Activated CD4-positive, alpha-beta T cell treated with anti-CD3 and anti-CD28 coated beads, Interleukin-2, amount 10 ng/mL, durations not matched to agents 24 days and 14 days (primary cell): ENCODE measurements at regions of chr7 and their contacts with region 1.

Region 1: DNA sequence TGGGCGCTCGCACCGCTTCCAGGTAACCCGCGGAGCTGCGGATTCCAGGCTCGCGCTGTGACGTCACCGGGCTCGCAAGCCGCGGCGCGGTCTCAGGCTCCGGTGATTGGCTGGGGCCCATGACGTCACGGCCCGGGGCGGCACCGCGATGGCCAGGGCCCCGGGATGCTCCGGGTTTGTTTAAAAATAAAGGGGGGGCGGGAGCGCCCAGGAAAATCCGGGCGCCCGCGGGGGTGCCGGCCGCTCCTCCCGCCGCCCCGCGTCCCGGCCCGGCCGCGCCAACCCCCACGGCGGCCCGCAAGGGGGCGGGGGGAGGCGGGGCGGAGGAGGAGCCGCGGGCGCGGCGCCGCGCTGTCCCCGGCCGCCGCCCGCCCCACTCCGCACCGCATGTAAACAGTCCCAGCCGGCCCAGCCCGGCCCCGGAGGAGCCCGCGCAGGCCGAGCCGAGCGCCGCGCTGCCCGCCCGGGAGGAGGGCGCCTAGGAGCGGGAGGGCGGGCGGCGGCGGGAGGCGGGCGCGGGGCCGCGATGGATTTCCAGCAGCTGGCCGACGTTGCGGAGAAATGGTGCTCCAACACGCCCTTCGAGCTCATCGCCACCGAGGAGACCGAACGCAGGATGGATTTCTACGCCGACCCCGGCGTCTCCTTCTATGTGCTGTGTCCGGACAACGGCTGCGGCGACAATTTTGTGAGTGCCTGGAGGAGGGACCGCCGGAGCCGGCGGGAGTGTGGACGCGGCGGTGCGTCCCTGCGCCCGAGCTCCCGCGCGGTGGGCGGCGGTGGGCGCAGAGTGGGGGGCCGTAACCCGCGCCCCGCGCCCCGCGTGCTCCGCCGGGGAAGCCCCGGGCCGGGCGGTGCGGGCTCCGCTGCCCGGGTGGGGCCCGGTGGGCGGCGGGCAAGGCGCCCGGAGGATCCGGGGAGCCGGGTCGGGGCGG is at the start of gene MTURN:
- DNase-seq: peak; percentile 96
- H3K4me3 Mint-ChIP-seq: peak within 1 kb of the TSS; percentile 92
- H3K27ac Mint-ChIP-seq: peak within 1 kb of the TSS; percentile 81
- H3K4me1 Mint-ChIP-seq: peaks cover 10% of the 10 kb centered on the region
- H3K27me3 Mint-ChIP-seq: peaks cover 35% of the 10 kb centered on the region
- total RNA-seq, gene MTURN: 3.8 and 4.2 TPM in 2 replicates

Region 2: DNA sequence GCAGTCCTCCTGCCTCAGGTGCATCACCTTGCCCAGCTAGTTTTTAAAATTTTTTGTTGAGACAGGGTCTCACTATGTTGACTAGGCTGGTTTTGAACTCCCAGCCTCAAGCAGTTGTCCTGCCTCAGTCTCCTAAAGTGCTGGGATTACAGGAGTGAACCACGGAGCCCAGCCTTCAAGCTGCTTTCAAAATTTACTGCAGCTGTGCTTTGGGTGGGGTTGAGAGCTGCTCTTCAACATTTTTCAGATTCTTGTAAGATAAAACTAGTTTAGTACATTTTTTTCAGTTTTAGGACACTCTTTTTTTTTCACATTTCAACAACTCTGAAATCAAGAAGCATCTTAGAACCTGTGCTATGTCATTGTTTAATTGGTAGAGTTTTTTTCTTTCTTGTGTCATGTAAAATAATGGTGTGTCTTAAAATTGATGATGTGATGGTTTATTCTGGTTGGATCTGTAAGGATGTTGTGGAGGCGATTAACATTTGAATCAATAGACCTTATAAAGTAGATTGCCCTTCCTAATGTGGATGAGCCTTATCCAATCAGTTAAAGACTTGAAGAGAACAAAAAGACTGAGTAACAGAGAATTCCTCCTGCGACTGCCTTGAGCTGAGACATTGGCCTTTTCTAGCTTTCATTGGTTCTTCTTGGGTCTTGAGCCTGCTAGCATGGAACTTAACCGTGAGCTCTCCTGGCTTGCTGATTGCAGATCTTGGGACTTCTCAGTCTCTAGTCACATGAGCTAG is 93.2 kb before region 1 on chr7:
- intact Hi-C with region 1: no loop called
- DNase-seq: no peak
- H3K4me3 Mint-ChIP-seq: no peak overlapping the region
- H3K27ac Mint-ChIP-seq: no peak overlapping the region
- H3K4me1 Mint-ChIP-seq: peaks cover 7% of the 10 kb centered on the region
- H3K27me3 Mint-ChIP-seq: no peaks in the 10 kb centered on the region

Region 3: DNA sequence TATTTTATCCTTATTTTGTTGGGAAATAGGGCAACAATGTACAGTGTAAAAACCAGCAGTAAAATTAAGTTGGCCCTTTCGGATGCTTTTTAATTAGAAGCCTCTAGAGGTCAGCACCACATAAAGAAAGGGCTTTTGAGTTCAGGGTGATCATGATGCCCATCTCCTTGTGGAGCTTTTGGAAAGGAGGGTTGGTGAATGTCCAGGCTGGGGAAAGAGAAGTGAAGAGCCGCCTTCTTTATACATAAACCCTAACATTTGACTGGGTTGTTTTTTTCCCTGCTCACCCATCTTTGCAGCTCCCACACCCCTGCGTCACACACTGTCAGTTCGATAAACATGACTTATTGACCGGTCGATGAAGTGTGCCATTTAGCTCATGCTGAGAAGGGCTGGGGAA is 29.7 kb after region 1 on chr7:
- intact Hi-C with region 1: loop called (anchors 2 kb)
- DNase-seq: no peak
- H3K4me3 Mint-ChIP-seq: no peak overlapping the region
- H3K27ac Mint-ChIP-seq: no peak overlapping the region
- H3K4me1 Mint-ChIP-seq: peaks cover 35% of the 10 kb centered on the region
- H3K27me3 Mint-ChIP-seq: no peaks in the 10 kb centered on the region

Region 4: GRCh38 chr7:30176463-30177109 is 41.7 kb after region 1 on chr7:
- intact Hi-C with region 1: no loop called
- DNase-seq: no peak
- H3K4me3 Mint-ChIP-seq: no peak overlapping the region
- H3K27ac Mint-ChIP-seq: no peak overlapping the region
- H3K4me1 Mint-ChIP-seq: peaks cover 7% of the 10 kb centered on the region
- H3K27me3 Mint-ChIP-seq: no peaks in the 10 kb centered on the region

Region 5: DNA sequence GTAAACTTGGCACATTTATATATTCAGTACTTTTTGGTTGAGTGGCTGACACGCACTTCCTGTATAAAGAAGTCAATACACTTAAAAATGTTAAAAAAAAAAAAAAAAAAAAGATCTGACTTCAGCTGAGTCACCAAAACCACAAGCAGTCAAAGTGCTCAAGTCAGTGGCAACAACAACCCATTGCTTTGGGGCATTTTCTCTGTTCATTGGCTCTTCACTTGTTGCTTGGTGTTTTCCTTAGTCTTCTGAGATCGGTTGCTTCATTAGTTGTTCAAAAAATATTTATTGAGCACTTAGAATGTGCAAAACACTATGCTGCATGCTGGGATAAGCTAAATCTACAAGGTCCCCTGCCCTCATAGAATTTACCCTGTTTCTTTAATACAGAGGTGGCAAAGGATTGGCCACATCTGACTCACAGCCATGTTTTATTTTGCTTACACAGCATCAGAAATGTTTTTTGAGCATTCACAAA is 213.2 kb after region 1 on chr7:
- intact Hi-C with region 1: no loop called
- DNase-seq: peak; percentile 87
- H3K4me3 Mint-ChIP-seq: peak overlapping the region; percentile 67
- H3K27ac Mint-ChIP-seq: peak overlapping the region; percentile 89
- H3K4me1 Mint-ChIP-seq: peaks cover 54% of the 10 kb centered on the region
- H3K27me3 Mint-ChIP-seq: no peaks in the 10 kb centered on the region

Region 6: DNA sequence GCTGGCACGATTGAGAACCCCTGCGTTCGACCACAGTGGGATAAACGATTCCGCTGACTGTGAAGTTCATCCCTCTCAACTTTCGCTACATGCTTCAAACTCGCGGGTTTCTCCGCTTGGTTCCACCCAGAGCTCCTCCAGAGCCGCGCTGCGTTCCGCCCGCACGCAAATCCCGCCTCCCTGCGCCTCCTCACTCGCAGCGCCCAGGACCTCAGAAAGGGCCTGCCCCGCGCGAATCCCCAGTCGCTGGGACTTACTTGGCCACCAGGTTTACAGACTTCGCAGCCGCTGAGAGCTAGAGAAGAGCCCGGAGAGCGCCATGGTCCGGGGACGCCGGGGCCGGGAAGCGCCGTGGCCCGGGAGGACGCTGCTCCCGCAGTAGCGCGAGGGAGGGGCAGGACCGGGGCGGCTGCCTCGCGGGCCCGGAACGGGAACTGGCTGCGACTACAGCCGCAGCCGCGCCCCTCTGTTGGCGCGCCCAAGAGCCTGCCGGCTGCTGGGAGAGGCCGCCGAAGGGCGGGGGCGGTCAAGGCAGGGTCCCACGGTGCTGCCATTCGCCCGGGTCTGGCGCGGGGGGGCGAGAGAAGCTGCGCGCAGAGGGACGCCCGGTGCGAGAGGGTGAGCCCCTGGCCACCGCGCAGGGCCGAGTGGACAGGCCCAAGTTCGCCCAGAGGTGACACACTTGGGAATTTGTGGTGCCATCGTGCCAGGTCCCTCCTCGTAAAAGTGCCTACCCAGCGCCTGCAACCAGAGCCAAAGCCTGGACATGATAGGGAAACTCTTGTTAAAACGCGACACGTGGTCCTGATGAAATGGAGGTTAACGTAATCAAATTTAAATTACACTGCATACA is 343.7 kb after region 1 on chr7 and contains the start of gene NOD1:
- intact Hi-C with region 1: loop called (anchors 1 kb)
- DNase-seq: peak; percentile 93
- H3K4me3 Mint-ChIP-seq: peak within 1 kb of the TSS; percentile 92
- H3K27ac Mint-ChIP-seq: peak within 1 kb of the TSS; percentile 93
- H3K4me1 Mint-ChIP-seq: peaks cover 45% of the 10 kb centered on the region
- H3K27me3 Mint-ChIP-seq: no peaks in the 10 kb centered on the region
- total RNA-seq, gene NOD1: 11.6 and 12.9 TPM in 2 replicates